GM10248 (cell line): ENCODE measurements at regions of chr6 and their contacts with region 1.

Region 1: GRCh38 chr6:11653028-11653583 is 115.6 kb downstream of the TMEM170B start:
- DNase-seq: peak; percentile 56
- CTCF ChIP-seq: no peak

Region 2: GRCh38 chr6:11120271-11121005 is 532.7 kb before region 1 on chr6:
- CTCF ChIA-PET with region 1: no interaction called
- POLR2A ChIA-PET with region 1: no interaction called
- DNase-seq: no peak
- CTCF ChIP-seq: no peak

Region 3: DNA sequence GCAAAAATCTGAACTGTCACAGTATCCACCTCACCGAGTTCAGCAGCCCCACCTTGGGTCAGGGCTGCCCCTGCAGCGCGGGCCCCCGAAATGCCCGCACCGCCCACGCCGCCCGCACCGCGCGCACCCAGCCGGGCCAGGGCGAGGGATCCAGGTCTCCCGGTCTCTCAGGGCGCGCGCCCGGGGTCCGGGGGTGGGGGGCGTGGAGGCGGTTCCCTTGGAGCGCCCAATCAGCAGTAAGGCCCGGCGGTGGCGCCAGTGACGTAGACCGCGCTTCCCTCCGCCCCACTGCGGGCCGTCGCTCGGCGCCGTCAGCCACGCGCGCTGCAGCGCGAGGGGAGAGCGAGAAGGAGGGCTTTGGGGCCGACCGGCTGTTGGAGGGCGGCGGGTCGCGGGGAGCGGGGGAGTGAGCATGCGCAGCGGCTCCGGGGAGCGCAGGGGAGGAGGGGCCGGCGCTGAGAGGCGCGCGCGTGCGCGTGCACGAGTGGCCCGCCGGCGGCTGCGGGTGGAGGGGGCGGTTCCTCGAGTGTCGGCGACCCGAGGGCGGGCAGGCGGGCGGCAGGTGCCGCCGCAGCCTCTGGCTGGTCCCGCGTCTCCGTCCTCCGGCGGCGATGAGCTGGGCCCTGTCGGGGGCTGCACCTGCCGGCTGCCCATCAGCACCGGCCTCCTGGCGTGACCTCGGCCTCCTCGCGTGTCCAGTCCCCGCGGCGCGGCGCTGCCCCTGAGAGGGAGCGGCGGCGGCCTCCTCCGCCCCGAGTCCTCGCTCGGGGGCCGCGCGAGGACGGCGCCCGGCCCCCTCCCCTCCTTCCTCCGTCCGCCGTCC is 115.7 kb before region 1 on chr6 and contains the start of gene TMEM170B:
- CTCF ChIA-PET with region 1: no interaction called
- POLR2A ChIA-PET with region 1: no interaction called
- DNase-seq: peak; percentile 98
- CTCF ChIP-seq: no peak

Region 4: DNA sequence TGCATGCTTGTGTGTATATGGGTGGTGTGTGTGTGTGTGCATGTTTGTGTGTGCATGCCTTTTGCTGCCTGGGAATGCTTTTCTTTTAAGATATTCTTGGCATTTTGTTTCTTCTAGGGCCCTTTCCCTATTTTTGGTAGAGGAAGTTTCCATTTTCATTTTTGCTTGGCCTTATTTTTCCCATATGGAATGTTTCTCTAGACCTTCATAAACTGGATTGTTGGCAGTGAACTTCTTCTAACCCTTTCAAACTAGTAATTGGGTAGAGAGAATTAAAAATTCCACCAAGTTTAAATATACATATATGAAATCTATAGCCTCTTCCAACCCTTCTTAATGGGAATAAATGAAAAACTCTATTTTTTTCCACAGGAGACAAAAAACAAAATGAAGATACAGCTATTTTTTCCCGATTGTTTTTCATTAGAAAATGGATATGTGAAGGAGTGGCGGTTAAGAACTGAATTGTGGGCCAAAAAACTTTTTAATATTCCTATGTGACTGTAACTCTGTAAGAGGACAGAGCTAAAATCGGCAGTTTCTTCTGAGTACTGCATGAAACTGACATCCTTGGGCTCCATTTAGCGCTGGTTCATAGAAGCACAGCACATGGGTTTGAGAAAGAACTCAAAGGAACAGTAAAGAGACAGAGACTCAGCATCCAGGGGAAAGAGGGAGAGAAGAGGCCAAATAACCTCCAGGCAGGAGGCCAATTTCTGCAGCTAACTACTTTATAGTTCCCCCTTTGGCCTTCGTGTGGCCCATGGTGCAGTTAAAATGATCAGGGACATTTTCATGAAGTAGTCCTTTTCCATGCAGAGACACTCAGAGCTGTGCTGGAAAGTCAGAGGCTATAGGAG is 13.5 kb before region 1 on chr6:
- CTCF ChIA-PET with region 1: interaction called, 19 read pairs
- POLR2A ChIA-PET with region 1: no interaction called
- DNase-seq: no peak
- CTCF ChIP-seq: no peak

Region 5: DNA sequence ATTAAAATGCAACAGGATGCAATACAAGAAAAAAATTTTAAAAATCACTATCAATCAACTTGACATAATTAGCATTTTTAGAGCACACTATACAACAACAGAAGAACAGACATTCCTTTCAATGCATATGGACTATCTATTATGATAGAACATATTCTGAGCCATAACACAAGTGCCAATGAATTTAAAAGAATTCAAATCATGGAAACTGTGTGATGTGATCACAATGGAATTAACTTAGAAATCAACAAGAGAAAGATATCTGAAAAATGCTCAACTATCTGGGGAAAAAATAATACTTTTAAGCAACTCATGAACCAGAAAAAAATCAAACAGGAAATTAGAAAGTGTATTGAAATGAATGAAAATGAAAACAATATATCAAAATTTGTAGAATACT is 19.1 kb after region 1 on chr6:
- CTCF ChIA-PET with region 1: interaction called, 43 read pairs
- POLR2A ChIA-PET with region 1: no interaction called
- DNase-seq: no peak
- CTCF ChIP-seq: no peak

Region 6: DNA sequence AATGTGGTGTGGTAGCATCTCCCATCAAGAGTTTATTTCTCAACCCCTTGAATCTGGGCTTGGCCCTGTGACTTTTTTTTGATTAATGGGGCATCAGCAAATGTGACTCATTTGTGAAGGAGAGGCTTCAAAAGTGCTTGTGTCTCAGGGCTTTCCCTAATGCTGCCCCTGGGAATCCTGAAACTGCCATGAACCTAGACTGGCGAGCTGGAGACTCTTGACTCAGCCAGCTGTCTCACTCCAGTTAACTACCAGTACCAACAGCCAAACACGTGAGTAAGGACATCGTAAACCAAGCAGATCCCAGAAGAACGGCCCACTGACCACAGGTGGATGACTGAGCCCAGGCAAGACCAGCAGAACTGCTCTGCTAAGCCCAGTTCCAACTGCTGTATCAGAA is 198.3 kb after region 1 on chr6:
- CTCF ChIA-PET with region 1: no interaction called
- POLR2A ChIA-PET with region 1: no interaction called
- DNase-seq: no peak
- CTCF ChIP-seq: no peak

Region 7: DNA sequence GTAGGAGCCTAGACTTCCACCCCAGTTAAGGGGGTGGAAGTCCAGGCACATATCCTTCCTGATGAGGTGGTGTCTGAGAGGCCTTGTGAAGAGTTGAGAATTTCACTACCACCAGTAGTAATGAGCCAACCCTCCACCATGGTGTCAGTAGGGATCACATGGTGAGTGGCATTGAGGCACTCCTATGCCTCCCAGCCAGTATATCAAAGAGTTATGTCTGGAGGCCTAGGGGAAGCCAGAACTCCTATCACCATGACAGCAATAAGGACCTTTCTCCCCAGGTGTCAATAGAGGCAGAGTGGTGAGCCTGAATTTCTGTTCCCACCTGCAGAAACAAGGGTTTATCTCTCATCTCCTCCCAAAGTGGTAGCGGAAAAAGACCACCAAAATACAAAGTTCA is 232.1 kb after region 1 on chr6:
- CTCF ChIA-PET with region 1: no interaction called
- POLR2A ChIA-PET with region 1: no interaction called
- DNase-seq: no peak
- CTCF ChIP-seq: no peak

Region 8: DNA sequence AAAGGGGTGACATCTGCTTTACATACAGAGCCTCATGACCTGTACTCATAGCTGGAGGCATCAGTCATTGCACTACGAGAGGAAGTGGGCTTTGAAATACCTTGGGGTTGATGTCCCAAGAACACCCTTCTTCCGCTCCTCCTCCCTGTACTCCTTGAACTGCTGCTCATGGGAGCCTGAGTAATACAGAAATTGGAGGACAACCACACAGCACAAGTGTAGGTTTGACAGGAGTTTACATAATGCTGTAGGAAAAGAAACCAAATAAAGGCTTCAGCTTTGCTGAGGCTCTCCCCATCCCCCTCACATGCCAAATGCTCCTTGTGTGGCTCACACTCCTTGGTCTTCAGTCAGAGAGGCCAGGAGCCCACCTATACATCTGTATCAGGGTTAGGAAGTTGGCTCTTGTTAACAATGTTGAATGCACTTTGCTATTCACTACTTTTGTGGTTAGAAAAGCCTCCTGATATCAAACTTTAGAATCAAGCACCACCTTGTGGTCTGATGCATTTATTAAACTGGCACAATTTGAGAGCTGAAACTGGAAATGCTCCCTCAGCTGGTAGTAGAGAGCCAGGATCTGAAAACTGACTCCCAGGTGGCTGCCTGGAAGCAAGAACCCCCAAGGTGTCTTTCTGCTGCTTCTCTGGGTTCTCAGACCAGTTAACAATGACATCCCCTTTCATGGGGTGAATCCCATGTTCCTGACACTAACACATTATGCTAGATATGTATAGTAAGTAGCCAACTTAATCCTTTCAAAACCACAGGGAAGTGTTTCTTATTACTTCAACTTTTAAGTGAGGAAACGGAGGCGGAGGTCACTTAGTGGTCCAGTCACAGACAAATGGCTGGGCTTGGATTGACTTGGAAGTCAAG is 580.8 kb after region 1 on chr6:
- CTCF ChIA-PET with region 1: interaction called, 13 read pairs
- POLR2A ChIA-PET with region 1: no interaction called
- DNase-seq: peak; percentile 18
- CTCF ChIP-seq: peak; percentile 43

Region 9: DNA sequence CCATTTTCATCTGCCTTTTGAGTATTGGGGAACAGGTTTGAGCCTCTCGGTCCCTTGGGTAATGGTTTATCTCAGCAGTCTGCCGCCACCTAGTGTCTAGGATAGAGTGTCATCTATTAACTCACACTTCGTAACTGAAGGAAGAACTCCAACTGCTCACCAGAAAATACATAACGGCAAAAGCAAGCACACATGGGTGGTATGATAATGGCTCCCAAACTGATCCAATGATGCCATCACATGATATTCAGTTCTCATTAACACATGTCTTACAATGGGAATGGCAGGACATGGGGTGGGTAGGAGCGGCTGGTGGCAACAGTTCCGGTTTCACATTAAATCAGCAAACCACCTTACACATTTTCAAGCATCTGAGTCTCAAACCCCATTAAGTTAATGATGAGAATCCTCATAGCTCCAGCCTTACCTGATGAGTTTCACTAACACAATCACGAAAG is 952.8 kb after region 1 on chr6:
- CTCF ChIA-PET with region 1: interaction called, 11 read pairs
- POLR2A ChIA-PET with region 1: no interaction called
- DNase-seq: no peak
- CTCF ChIP-seq: peak; percentile 56